PC-9 (cell line): ENCODE measurements at regions of chr1 and their contacts with region 1.

Region 1: DNA sequence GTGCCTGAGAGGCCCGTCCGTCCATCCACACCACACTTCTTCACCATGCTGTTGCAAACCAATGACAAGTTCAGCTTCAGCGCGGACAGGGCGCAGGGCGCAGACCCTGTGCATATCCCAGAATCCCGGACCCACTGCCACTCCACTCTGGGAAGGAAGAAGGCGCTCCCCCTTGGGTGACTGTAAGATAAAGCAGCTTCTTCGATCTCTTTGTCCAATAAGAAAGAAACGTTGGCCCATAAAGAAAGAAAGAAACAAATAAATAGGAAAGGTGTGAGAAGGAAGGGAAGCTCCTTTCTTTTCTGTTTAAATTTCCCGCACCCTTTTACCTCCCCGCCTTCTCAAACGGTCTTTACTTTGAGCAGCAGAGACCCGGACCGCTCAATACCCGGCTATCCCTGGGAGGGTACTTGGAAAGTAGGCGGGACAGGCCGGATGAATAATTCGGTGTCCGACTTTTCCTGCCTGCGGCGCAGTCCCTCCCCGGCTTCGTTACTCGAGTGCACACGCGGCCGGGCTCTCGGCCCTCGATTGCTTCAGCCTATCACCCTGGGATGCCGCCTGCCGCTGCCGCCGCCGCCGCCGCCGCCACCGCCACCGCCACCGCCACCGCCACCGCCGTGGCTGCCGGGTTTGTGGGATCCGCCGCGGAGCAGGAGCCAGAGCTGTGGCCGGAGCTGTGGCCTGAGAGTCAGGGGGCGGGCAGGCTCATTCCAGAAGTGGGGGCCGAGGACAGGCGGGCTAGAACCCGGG is 523 bp upstream of the RASAL2 start:
- DNase-seq: peak; percentile 90 to 91
- H3K4me3 ChIP-seq: peak overlapping the region; percentile 85
- H3K27ac ChIP-seq: peak overlapping the region; percentile 76
- H3K4me1 ChIP-seq: peaks cover 48% of the 10 kb centered on the region
- H3K27me3 ChIP-seq: no peaks in the 10 kb centered on the region
- CTCF ChIP-seq: no peak

Region 2: DNA sequence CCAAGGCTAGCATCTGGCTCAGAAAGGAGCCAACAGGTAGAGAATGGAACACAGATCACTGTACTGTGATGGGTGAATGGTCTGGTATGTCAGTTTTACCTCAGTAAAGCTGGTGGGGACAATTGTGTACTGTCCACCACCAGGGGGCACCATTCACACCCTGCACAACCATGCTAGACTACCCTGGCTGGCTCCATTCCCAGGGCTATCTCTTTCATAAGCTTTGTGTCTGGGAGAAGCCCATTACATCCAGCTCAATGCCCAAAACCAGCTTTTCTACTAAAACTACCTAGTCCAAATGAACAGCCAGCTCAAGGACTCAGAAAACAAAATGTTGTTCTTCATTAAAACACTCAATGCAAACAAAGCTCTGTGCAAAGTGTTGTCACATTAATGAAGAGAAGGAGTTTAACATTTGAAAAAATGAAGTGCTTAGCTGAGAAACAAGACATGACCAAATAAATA is 61.5 kb before region 1 on chr1:
- CTCF ChIA-PET with region 1: interaction called, 3 read pairs
- POLR2A ChIA-PET with region 1: no interaction called
- intact Hi-C with region 1: loop called (anchors 2 kb)
- DNase-seq: peak; percentile 86 to 87
- H3K4me3 ChIP-seq: no peak overlapping the region
- H3K27ac ChIP-seq: peak overlapping the region; percentile 46
- H3K4me1 ChIP-seq: peaks cover 20% of the 10 kb centered on the region
- H3K27me3 ChIP-seq: no peaks in the 10 kb centered on the region
- CTCF ChIP-seq: peak; percentile 91

Region 3: DNA sequence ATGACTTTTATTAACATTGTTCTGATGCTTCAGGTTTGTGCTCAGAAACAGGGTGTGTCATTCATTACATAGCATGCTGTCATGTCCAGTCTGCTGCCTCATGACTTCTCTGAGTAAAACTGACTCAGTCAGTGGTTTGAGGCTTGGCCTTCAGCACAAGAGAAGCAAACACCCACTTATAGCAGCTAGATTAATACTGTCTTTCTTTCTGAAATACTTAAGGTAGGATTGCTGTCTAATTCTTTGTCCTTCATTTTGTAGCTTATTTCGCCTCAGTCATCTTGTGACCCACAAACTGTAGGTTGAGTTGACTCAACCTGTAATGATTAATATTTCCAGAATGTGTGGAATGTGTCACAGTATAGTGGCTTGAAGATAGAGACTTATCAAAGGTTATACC is 33.4 kb after region 1 on chr1:
- CTCF ChIA-PET with region 1: no interaction called
- POLR2A ChIA-PET with region 1: no interaction called
- intact Hi-C with region 1: loop called (anchors 2 kb)
- DNase-seq: peak; percentile 55 to 92
- H3K4me3 ChIP-seq: peak overlapping the region; percentile 9; the same call in 1 of the 2 replicates
- H3K27ac ChIP-seq: peak overlapping the region; percentile 90
- H3K4me1 ChIP-seq: peaks cover 45% of the 10 kb centered on the region
- H3K27me3 ChIP-seq: no peaks in the 10 kb centered on the region
- CTCF ChIP-seq: no peak

Region 4: DNA sequence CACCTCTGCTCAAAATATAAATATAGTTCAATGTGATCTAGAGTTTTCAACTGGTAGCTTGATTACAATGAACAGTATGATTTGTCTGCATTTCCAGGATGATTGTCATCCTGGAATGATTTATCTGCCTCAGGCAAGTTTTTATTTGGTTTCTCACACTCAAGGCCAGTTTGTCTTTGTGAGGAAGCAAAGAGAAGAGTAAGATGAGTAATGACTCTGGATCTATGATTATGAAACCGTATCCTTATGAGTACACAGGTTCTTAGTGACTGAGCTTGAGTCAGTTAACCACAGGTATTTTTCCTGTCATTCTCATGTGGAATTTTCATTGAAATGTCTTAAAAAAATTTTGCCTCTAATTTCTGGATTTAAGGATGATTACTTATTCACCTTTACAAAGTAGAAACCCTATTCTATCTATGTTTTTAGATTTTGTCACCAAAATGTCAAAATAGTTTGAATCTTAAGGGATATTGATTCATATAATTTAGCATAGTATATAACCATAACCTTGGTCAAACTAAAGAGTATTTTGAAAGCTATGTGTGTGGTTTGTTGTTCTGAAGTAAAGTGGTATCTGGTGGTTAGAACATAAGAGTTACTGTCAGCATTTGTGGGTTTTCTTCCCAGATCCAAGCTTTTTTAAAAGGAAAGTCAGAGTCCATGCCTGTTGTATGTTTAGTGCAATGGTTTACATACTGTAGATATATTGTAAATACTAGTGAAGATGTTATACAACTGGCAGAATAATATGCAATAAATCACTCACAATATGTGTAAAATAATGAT is 145.5 kb after region 1 on chr1:
- CTCF ChIA-PET with region 1: no interaction called
- POLR2A ChIA-PET with region 1: interaction called, 5 read pairs
- intact Hi-C with region 1: loop called (anchors 1 kb)
- DNase-seq: peak; percentile 51 to 100
- H3K4me3 ChIP-seq: peak overlapping the region; percentile 5; the same call in 1 of the 2 replicates
- H3K27ac ChIP-seq: peak overlapping the region; percentile 97
- H3K4me1 ChIP-seq: peaks cover 58% of the 10 kb centered on the region
- H3K27me3 ChIP-seq: no peaks in the 10 kb centered on the region
- CTCF ChIP-seq: no peak

Region 5: DNA sequence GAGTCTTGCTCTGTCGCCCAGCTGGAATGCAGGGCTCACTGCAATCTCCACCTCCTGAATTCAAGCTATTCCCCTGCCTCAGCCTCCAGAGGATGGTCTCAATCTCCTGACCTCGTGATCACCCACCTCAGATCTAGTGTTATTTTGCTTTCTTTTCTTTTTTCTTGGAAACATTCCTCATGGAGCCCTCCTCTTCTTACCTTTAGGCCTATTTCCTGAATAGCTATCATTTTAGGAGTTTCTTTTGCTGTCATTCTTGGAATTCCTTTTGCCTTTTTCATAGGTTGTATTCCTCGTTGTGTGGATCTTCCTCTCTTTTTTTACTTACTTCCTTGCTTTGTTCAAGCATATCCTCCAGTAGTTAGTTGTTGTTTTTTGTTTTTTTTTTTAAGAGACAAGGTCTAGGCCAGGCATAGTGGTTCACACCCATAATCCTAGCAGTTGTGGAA is 174.3 kb after region 1 on chr1:
- CTCF ChIA-PET with region 1: no interaction called
- POLR2A ChIA-PET with region 1: interaction called, 24 read pairs
- intact Hi-C with region 1: no loop called
- DNase-seq: peak; percentile 66 to 90
- H3K4me3 ChIP-seq: no peak overlapping the region
- H3K27ac ChIP-seq: peak overlapping the region; percentile 78
- H3K4me1 ChIP-seq: peaks cover 29% of the 10 kb centered on the region
- H3K27me3 ChIP-seq: no peaks in the 10 kb centered on the region
- CTCF ChIP-seq: no peak